ENCODE measurements at regions of chr7 and their contacts with region 1.

Region 1: GRCh38 chr7:37284805-37285231 is 163.8 kb downstream of the ELMO1 start:
- DNase-seq: peak in 1 of 3 donors; percentile 26
- H3K4me3 ChIP-seq: peak overlapping the region in 2 of 7 experiments; percentile 7
- H3K27ac ChIP-seq: no peak overlapping the region
- H3K4me1 ChIP-seq: peaks cover 17 to 61% (median 55%) of the 10 kb centered on the region in 4 experiments
- H3K27me3 ChIP-seq: no peaks in the 10 kb centered on the region

Region 2: DNA sequence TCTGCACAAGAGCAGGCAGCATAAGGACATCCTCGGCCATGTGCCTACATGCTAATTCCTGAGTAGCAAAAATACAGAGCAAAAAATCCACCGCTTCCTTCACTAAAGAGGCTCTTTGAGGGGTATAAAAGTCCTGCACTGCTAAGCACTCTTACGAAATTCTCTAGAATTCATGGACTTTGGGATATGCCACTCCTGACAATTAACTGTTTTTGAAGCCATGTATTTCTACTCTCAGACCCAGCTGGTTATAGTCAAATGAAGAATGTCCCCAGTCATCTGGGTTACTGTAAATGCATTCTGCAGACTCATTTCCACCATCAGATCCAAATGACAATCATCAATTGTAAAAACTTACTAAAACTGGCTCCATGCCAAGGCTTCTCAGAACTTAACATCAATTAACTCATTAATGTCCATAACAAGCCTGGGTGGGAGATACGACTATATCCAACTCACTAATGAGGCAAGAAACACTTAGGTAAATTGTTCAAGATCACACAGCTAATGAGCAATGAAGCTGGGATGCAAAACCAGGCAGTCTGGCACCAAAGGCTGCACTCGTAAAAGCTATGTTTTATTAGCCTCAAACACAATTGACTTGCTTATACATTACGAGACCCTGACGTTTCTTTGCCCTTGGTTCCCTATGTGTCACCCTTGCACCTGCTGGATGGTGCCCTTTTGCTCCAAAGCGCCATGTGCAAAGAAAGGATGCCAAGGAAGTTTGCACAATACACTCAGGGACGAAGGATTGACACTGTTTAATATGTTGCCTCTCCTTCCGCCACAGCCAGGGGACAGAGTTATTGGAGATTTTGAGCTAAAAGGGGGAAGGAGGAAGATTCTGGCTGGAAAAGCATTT is 86.5 kb before region 1 on chr7:
- CTCF ChIA-PET with region 1: no interaction called
- POLR2A ChIA-PET with region 1: no interaction called
- DNase-seq: peak in 2 of 3 donors; percentile 62 to 63
- H3K4me3 ChIP-seq: no peak overlapping the region
- H3K27ac ChIP-seq: no peak overlapping the region
- H3K4me1 ChIP-seq: peaks cover 0 to 32% (median 15%) of the 10 kb centered on the region in 4 experiments
- H3K27me3 ChIP-seq: no peaks in the 10 kb centered on the region

Region 3: GRCh38 chr7:37269711-37270508 is 14.9 kb before region 1 on chr7:
- CTCF ChIA-PET with region 1: interaction called, 26 read pairs
- POLR2A ChIA-PET with region 1: no interaction called
- DNase-seq: no peak
- H3K4me3 ChIP-seq: no peak overlapping the region
- H3K27ac ChIP-seq: no peak overlapping the region
- H3K4me1 ChIP-seq: peaks cover 8 to 18% (median 15%) of the 10 kb centered on the region in 4 experiments
- H3K27me3 ChIP-seq: no peaks in the 10 kb centered on the region

Region 4: GRCh38 chr7:37297546-37297945 is 12.7 kb after region 1 on chr7:
- CTCF ChIA-PET with region 1: interaction called, 7 read pairs
- POLR2A ChIA-PET with region 1: interaction called, 14 read pairs
- DNase-seq: peak in 1 of 3 donors; percentile 34
- H3K4me3 ChIP-seq: no peak overlapping the region
- H3K27ac ChIP-seq: no peak overlapping the region
- H3K4me1 ChIP-seq: no peaks in the 10 kb centered on the region
- H3K27me3 ChIP-seq: no peaks in the 10 kb centered on the region

Region 5: GRCh38 chr7:37310327-37311080 is 25.7 kb after region 1 on chr7:
- CTCF ChIA-PET with region 1: interaction called, 15 read pairs
- POLR2A ChIA-PET with region 1: interaction called, 4 read pairs
- DNase-seq: peak; percentile 56 to 89 (median 87)
- H3K4me3 ChIP-seq: peak overlapping the region in 2 of 7 experiments; percentile 3 to 31
- H3K27ac ChIP-seq: peak overlapping the region; percentile 9 to 72
- H3K4me1 ChIP-seq: peaks cover 16 to 29% (median 24%) of the 10 kb centered on the region in 4 experiments
- H3K27me3 ChIP-seq: no peaks in the 10 kb centered on the region

Region 6: GRCh38 chr7:37719077-37719476 is 434.3 kb after region 1 on chr7:
- CTCF ChIA-PET with region 1: no interaction called
- POLR2A ChIA-PET with region 1: no interaction called
- DNase-seq: no peak
- H3K4me3 ChIP-seq: no peak overlapping the region
- H3K27ac ChIP-seq: no peak overlapping the region
- H3K4me1 ChIP-seq: peaks cover 0 to 4% (median 0%) of the 10 kb centered on the region in 4 experiments
- H3K27me3 ChIP-seq: no peaks in the 10 kb centered on the region